ENCODE measurements at regions of chr22 and their contacts with region 1.

Region 1: DNA sequence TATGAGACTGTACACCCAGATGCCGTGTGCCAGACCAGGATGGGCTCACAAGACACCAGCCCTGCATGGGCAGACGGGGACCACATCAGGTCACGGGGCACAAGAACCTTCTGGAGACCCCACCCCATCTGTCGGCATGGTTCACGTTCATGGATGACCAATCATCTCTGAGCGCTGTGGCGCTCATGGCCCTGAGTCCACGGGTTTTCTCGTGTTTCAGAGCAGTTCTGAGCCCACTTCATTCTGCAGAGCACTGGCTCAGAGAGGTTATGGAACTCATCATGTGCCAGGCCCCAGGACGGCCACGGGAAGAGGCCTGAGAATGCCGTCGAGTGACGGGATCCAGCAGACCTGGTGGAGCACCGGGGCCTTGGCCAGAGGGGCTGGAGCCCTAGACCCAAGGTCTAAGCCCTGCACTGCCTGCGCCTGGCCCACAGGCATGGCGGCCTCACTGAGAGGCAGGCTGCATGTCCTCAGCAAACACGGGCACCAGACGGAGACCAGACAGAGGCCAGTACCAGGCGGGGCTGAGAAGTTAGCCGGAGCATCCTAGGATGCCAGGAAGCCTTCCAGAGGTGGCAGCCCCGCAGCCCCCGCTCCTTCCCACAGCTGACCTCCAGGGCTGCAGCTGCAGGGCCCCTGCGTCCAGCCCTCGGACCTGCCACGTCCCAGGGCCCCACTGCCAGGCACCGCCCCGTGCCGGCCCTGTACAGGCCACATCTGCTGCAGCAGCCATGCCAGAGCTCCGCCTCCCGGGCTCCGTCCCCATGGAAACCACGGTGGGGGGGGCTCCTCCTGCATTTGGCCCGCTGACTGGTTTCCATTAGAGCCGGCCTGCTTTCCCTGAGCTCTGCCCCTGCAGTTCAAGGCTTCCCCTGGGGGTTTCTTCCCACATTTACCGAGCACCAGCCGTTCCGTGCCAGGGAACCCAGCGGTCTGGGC is 62.7 kb upstream of the PPARA start:
- DNase-seq: peak; percentile 79 to 95
- ATAC-seq: peak; percentile 11 to 44
- H3K4me3 ChIP-seq: peak overlapping the region; percentile 26 to 44 (median 40)
- H3K27ac ChIP-seq: peak overlapping the region; percentile 94 to 98 (median 97)
- H3K4me1 ChIP-seq: peaks cover 97 to 100% of the 10 kb centered on the region in 2 donors
- H3K27me3 ChIP-seq: no peaks in the 10 kb centered on the region
- CTCF ChIP-seq: no peak
- POLR2A ChIP-seq: peak; percentile 44 to 63

Region 2: DNA sequence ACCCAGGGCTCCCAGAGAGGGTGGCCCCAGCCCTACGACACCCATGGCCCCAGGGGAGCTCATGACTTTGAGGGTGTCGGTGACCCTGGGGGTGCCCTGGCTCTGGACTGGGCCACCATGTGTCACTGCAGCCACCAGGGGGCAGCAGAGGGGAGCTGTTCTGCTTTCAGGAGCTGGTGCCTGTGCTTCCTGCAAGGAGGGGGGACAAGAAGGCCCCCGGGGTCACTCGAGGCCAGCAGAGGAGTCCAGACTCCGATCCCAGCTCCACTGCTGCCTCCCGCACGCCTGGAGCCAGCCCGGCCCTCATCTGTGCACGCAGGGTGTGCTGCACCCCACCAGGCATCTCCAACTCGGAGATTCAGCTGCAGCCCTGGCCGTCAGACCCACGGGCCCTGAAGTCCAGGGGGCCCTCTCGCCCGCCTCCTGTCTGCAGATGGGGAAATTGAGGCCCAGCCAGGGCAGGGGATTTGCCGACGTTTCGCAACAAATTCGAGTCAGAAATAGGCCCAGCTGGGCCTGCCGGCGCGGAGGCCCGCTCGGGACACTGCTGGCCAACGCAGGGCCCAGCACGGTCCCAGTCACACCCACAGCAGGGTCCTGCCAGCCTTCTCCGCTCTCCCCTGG is 81.1 kb before region 1 on chr22:
- in situ Hi-C with region 1: no loop called
- intact Hi-C with region 1: no loop called
- DNase-seq: peak; percentile 78 to 91
- ATAC-seq: peak; percentile 77 to 78
- H3K4me3 ChIP-seq: peak overlapping the region in 3 of 4 donors; percentile 8 to 29 (median 27)
- H3K27ac ChIP-seq: peak overlapping the region; percentile 84 to 96 (median 92)
- H3K4me1 ChIP-seq: peaks cover 30 to 40% of the 10 kb centered on the region in 2 donors
- H3K27me3 ChIP-seq: no peaks in the 10 kb centered on the region
- CTCF ChIP-seq: peak; percentile 93 to 99 (median 98)
- POLR2A ChIP-seq: no peak

Region 3: GRCh38 chr22:46035742-46036557 is 51.7 kb before region 1 on chr22:
- in situ Hi-C with region 1: no loop called
- intact Hi-C with region 1: loop called (anchors 1 kb)
- DNase-seq: peak; percentile 99 to 100
- ATAC-seq: peak; percentile 87 to 89
- H3K4me3 ChIP-seq: peak overlapping the region; percentile 75 to 80 (median 80)
- H3K27ac ChIP-seq: peak overlapping the region; percentile 97 to 99 (median 99)
- H3K4me1 ChIP-seq: peaks cover 42 to 45% of the 10 kb centered on the region in 2 donors
- H3K27me3 ChIP-seq: no peaks in the 10 kb centered on the region
- CTCF ChIP-seq: peak in 1 of 5 experiments; percentile 4
- POLR2A ChIP-seq: peak; percentile 96 to 98

Region 4: GRCh38 chr22:46071451-46072109 is 16.0 kb before region 1 on chr22:
- in situ Hi-C with region 1: no loop called
- intact Hi-C with region 1: loop called (anchors 2 kb)
- DNase-seq: peak; percentile 89 to 93
- ATAC-seq: peak; percentile 37 to 46
- H3K4me3 ChIP-seq: peak overlapping the region; percentile 78 to 86 (median 82)
- H3K27ac ChIP-seq: peak overlapping the region; percentile 94 to 98 (median 97)
- H3K4me1 ChIP-seq: peaks cover 47 to 58% of the 10 kb centered on the region in 2 donors
- H3K27me3 ChIP-seq: no peaks in the 10 kb centered on the region
- CTCF ChIP-seq: no peak
- POLR2A ChIP-seq: peak; percentile 83 to 88

Region 5: GRCh38 chr22:46105494-46106278 is 18.1 kb after region 1 on chr22:
- in situ Hi-C with region 1: no loop called
- intact Hi-C with region 1: loop called (anchors 2 kb)
- DNase-seq: peak; percentile 74 to 84
- ATAC-seq: peak; percentile 58 to 68
- H3K4me3 ChIP-seq: peak overlapping the region in 1 of 4 donors; percentile 15
- H3K27ac ChIP-seq: peak overlapping the region; percentile 84 to 98 (median 96)
- H3K4me1 ChIP-seq: peaks cover 93 to 97% of the 10 kb centered on the region in 2 donors
- H3K27me3 ChIP-seq: no peaks in the 10 kb centered on the region
- CTCF ChIP-seq: no peak
- POLR2A ChIP-seq: no peak

Region 6: GRCh38 chr22:46122511-46122971 is 34.9 kb after region 1 on chr22:
- in situ Hi-C with region 1: no loop called
- intact Hi-C with region 1: no loop called
- DNase-seq: peak in 1 of 2 donors; percentile 65
- ATAC-seq: peak; percentile 52 to 72
- H3K4me3 ChIP-seq: peak overlapping the region in 1 of 4 donors; percentile 29
- H3K27ac ChIP-seq: no peak overlapping the region
- H3K4me1 ChIP-seq: peaks cover 4% of the 10 kb centered on the region in 2 donors
- H3K27me3 ChIP-seq: no peaks in the 10 kb centered on the region
- CTCF ChIP-seq: peak; percentile 94 to 99 (median 98)
- POLR2A ChIP-seq: no peak

Region 7: GRCh38 chr22:46476547-46476941 is 388.9 kb after region 1 on chr22:
- in situ Hi-C with region 1: no loop called
- intact Hi-C with region 1: no loop called
- DNase-seq: no peak
- ATAC-seq: no peak
- H3K4me3 ChIP-seq: no peak overlapping the region
- H3K27ac ChIP-seq: no peak overlapping the region
- H3K4me1 ChIP-seq: no peaks in the 10 kb centered on the region
- H3K27me3 ChIP-seq: peaks cover 3 to 26% (median 6%) of the 10 kb centered on the region in 3 donors
- CTCF ChIP-seq: no peak
- POLR2A ChIP-seq: no peak

Measured in gastrocnemius medialis (tissue), 4 donors.